CD4-positive, alpha-beta T cell (primary cell): ENCODE measurements at regions of chr12 and their contacts with region 1.

Region 1: DNA sequence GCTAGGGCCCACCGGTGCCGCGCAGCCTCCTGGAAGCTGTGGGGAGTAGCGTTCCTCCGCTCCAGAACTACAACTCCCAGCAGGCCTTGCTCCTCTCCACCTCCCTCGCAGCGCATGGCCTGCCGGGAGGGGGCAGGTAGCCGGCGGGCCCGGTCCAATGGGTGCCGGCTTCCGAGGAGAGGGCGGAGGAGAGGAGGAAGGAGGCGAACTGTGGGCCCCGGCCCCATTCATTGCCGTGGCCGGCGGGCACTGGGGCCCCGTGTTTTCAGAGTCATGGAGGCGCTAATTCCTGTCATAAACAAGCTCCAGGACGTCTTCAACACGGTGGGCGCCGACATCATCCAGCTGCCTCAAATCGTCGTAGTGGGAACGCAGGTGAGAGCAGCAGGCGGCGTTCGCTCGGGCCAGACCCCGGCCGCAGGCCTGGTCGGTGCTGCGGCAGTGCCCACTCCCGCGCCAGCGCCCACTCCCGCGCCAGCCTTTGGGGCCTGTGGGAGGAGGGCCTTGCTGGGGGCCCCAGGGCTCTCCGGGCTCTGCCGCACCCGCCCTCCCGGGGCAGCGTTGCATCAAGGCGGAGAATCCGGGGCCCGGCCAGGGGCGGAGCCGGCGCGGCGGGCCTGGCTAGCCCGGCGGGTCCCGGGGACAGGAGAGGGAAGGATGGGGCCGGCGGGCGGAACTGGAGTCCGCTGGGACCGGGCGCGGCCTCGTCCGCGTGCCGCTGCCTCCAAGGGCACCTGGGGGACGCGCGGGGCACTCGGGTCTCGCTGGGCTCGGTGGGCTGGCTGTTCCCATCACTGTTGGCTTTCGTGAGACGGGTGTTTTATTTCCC is at the start of gene DNM1L:
- DNase-seq: peak; percentile 84 to 96 (median 90)
- ATAC-seq: peak; percentile 98
- H3K4me3 ChIP-seq: peak within 1 kb of the TSS; percentile 79
- H3K4me3 Mint-ChIP-seq: peak within 1 kb of the TSS; percentile 94
- H3K27ac ChIP-seq: peak within 1 kb of the TSS; percentile 67 to 73
- H3K27ac Mint-ChIP-seq: peak within 1 kb of the TSS; percentile 84
- H3K4me1 ChIP-seq: peaks cover 11% of the 10 kb centered on the region
- H3K4me1 Mint-ChIP-seq: peaks cover 36% of the 10 kb centered on the region
- H3K27me3 ChIP-seq: no peaks in the 10 kb centered on the region
- H3K27me3 Mint-ChIP-seq: no peaks in the 10 kb centered on the region
- CTCF ChIP-seq: no peak
- total RNA-seq, gene DNM1L: 70.9 to 74.6 TPM

Region 2: GRCh38 chr12:30695199-30696103 is 1983.9 kb before region 1 on chr12 and contains the start of gene IPO8:
- CTCF ChIA-PET with region 1: no interaction called
- POLR2A ChIA-PET with region 1: no interaction called
- intact Hi-C with region 1: loop called in 1 of 2 experiments (anchors 5 kb)
- DNase-seq: peak; percentile 69 to 93 (median 82)
- ATAC-seq: peak; percentile 94
- H3K4me3 ChIP-seq: peak within 1 kb of the TSS; percentile 90
- H3K4me3 Mint-ChIP-seq: peak within 1 kb of the TSS; percentile 100
- H3K27ac ChIP-seq: peak within 1 kb of the TSS; percentile 61 to 64
- H3K27ac Mint-ChIP-seq: peak within 1 kb of the TSS; percentile 90
- H3K4me1 ChIP-seq: peaks cover 30% of the 10 kb centered on the region
- H3K4me1 Mint-ChIP-seq: peaks cover 54% of the 10 kb centered on the region
- H3K27me3 ChIP-seq: no peaks in the 10 kb centered on the region
- H3K27me3 Mint-ChIP-seq: no peaks in the 10 kb centered on the region
- CTCF ChIP-seq: peak; percentile 56
- total RNA-seq, gene IPO8: 17.2 to 17.5 TPM

Region 3: GRCh38 chr12:30754709-30755394 is 1924.5 kb before region 1 on chr12 and contains the start of gene CAPRIN2:
- CTCF ChIA-PET with region 1: no interaction called
- POLR2A ChIA-PET with region 1: no interaction called
- intact Hi-C with region 1: loop called in 1 of 2 experiments (anchors 10 kb)
- DNase-seq: peak; percentile 86 to 97 (median 94)
- ATAC-seq: peak; percentile 90
- H3K4me3 ChIP-seq: peak within 1 kb of the TSS; percentile 81
- H3K4me3 Mint-ChIP-seq: peak within 1 kb of the TSS; percentile 94
- H3K27ac ChIP-seq: peak within 1 kb of the TSS; percentile 51 to 76
- H3K27ac Mint-ChIP-seq: peak within 1 kb of the TSS; percentile 77
- H3K4me1 ChIP-seq: peaks cover 16% of the 10 kb centered on the region
- H3K4me1 Mint-ChIP-seq: peaks cover 45% of the 10 kb centered on the region
- H3K27me3 ChIP-seq: no peaks in the 10 kb centered on the region
- H3K27me3 Mint-ChIP-seq: no peaks in the 10 kb centered on the region
- CTCF ChIP-seq: peak; percentile 18
- total RNA-seq, gene CAPRIN2: 21.2 to 24.6 TPM

Region 4: GRCh38 chr12:31325877-31326631 is 1353.3 kb before region 1 on chr12 and contains the start of gene SINHCAF:
- CTCF ChIA-PET with region 1: no interaction called
- POLR2A ChIA-PET with region 1: no interaction called
- intact Hi-C with region 1: loop called in 1 of 2 experiments (anchors 5 kb)
- DNase-seq: peak; percentile 96 to 100 (median 99)
- ATAC-seq: peak; percentile 52
- H3K4me3 ChIP-seq: peak within 1 kb of the TSS; percentile 99
- H3K4me3 Mint-ChIP-seq: peak within 1 kb of the TSS; percentile 92
- H3K27ac ChIP-seq: peak within 1 kb of the TSS; percentile 77 to 95
- H3K27ac Mint-ChIP-seq: peak within 1 kb of the TSS; percentile 85
- H3K4me1 ChIP-seq: peaks cover 27% of the 10 kb centered on the region
- H3K4me1 Mint-ChIP-seq: peaks cover 32% of the 10 kb centered on the region
- H3K27me3 ChIP-seq: no peaks in the 10 kb centered on the region
- H3K27me3 Mint-ChIP-seq: no peaks in the 10 kb centered on the region
- CTCF ChIP-seq: no peak
- total RNA-seq, gene SINHCAF: 103 to 119 TPM

Region 5: GRCh38 chr12:31406345-31406744 is 1273.0 kb before region 1 on chr12:
- CTCF ChIA-PET with region 1: no interaction called
- POLR2A ChIA-PET with region 1: no interaction called
- intact Hi-C with region 1: loop called in 1 of 2 experiments (anchors 10 kb)
- DNase-seq: no peak
- ATAC-seq: no peak
- H3K4me3 ChIP-seq: no peak overlapping the region
- H3K4me3 Mint-ChIP-seq: no peak overlapping the region
- H3K27ac ChIP-seq: no peak overlapping the region
- H3K27ac Mint-ChIP-seq: no peak overlapping the region
- H3K4me1 ChIP-seq: no peaks in the 10 kb centered on the region
- H3K4me1 Mint-ChIP-seq: no peaks in the 10 kb centered on the region
- H3K27me3 ChIP-seq: no peaks in the 10 kb centered on the region
- H3K27me3 Mint-ChIP-seq: peaks cover 7% of the 10 kb centered on the region
- CTCF ChIP-seq: no peak

Region 6: GRCh38 chr12:32455607-32456071 is 223.7 kb before region 1 on chr12:
- CTCF ChIA-PET with region 1: no interaction called
- POLR2A ChIA-PET with region 1: no interaction called
- intact Hi-C with region 1: loop called in 1 of 2 experiments (anchors 10 kb)
- DNase-seq: peak in 4 of 14 experiments; percentile 9 to 59 (median 54)
- ATAC-seq: no peak
- H3K4me3 ChIP-seq: no peak overlapping the region
- H3K4me3 Mint-ChIP-seq: no peak overlapping the region
- H3K27ac ChIP-seq: no peak overlapping the region
- H3K27ac Mint-ChIP-seq: no peak overlapping the region
- H3K4me1 ChIP-seq: no peaks in the 10 kb centered on the region
- H3K4me1 Mint-ChIP-seq: no peaks in the 10 kb centered on the region
- H3K27me3 ChIP-seq: peaks cover 0 to 5% of the 10 kb centered on the region in 2 experiments
- H3K27me3 Mint-ChIP-seq: no peaks in the 10 kb centered on the region
- CTCF ChIP-seq: peak; percentile 68

Region 7: DNA sequence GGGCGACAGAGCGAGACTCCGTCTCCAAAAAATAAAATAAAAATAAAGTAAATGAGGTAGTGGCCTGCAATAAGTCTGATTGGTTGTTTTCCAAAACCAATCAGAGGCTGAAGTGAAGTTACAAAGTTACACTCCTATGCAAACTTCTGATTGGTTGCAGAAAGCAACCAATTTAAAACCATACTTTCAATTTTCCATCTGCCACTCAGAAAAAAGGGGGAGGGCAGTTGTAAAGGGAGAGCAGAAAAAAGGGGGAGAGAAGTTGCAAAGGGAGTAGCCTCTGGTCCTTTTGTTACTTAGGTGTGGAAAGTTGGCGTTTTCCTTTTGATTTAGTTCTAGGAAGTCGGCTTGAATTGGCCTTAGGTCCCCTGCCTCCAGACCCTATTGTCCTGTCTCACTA is 12.8 kb before region 1 on chr12:
- CTCF ChIA-PET with region 1: no interaction called
- POLR2A ChIA-PET with region 1: no interaction called
- intact Hi-C with region 1: no loop called
- DNase-seq: peak in 1 of 14 experiments; percentile 5
- ATAC-seq: no peak
- H3K4me3 ChIP-seq: no peak overlapping the region
- H3K4me3 Mint-ChIP-seq: peak overlapping the region; percentile 79
- H3K27ac ChIP-seq: no peak overlapping the region
- H3K27ac Mint-ChIP-seq: no peak overlapping the region
- H3K4me1 ChIP-seq: no peaks in the 10 kb centered on the region
- H3K4me1 Mint-ChIP-seq: peaks cover 6% of the 10 kb centered on the region
- H3K27me3 ChIP-seq: no peaks in the 10 kb centered on the region
- H3K27me3 Mint-ChIP-seq: no peaks in the 10 kb centered on the region
- CTCF ChIP-seq: no peak

Region 8: GRCh38 chr12:34022079-34022830 is 1343.0 kb after region 1 on chr12 and contains the start of gene ALG10:
- CTCF ChIA-PET with region 1: interaction called, 3 read pairs
- POLR2A ChIA-PET with region 1: interaction called, 10 read pairs
- intact Hi-C with region 1: loop called (anchors 2 kb)
- DNase-seq: peak; percentile 91 to 98 (median 95)
- ATAC-seq: peak; percentile 96
- H3K4me3 ChIP-seq: peak within 1 kb of the TSS; percentile 93
- H3K4me3 Mint-ChIP-seq: peak within 1 kb of the TSS; percentile 96
- H3K27ac ChIP-seq: peak within 1 kb of the TSS; percentile 88 to 94
- H3K27ac Mint-ChIP-seq: peak within 1 kb of the TSS; percentile 99
- H3K4me1 ChIP-seq: peaks cover 6% of the 10 kb centered on the region
- H3K4me1 Mint-ChIP-seq: peaks cover 40% of the 10 kb centered on the region
- H3K27me3 ChIP-seq: no peaks in the 10 kb centered on the region
- H3K27me3 Mint-ChIP-seq: no peaks in the 10 kb centered on the region
- CTCF ChIP-seq: peak; percentile 76
- total RNA-seq, gene ALG10: 9.0 to 10.7 TPM